Caco-2 (cell line): ENCODE measurements at regions of chr14 and their contacts with region 1.

Region 1: GRCh38 chr14:102316743-102317563 is 2.6 kb upstream of the ZNF839 start:
- DNase-seq: peak; percentile 93 to 96
- H3K4me3 ChIP-seq: peak overlapping the region; percentile 55
- H3K4me3 Mint-ChIP-seq: peak overlapping the region; percentile 89
- H3K27ac Mint-ChIP-seq: peak overlapping the region; percentile 94
- H3K4me1 ChIP-seq: peaks cover 30% of the 10 kb centered on the region
- H3K4me1 Mint-ChIP-seq: peaks cover 32% of the 10 kb centered on the region
- H3K27me3 ChIP-seq: no peaks in the 10 kb centered on the region
- H3K27me3 Mint-ChIP-seq: no peaks in the 10 kb centered on the region
- CTCF ChIP-seq: peak; percentile 72 to 88

Region 2: DNA sequence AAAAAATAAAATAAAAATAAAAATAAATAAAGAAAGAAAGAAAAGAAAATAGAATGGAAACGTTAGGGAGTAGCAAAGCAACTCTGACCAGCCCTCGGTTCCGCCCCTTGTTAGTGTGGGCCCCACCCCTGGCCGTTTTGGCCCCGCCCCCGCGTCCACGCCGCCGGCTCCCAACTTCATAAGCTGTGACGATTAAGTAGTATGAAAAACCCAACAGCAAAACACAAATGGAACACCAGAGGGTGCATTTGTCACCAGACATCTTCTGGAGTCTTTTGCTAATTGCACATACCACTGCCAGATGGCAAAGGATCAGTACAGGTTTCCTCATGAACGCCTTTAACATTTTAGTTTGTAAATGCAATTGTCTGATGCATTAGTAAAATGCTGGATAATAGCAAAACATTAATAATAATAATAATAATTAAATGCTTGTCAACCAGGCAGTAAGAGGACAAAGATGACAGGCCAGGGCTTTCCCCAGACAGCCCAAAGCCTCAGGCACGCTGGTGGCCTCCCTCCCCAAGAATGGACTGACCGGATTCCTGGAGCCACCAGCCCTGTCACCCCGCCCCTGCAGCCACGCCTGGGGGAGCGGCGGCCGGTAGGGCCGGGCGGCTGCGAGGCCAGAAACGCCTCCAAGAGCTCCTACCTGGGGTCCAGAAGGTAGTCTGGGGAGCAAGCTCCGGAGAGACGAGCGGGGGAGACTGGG is 253.7 kb before region 1 on chr14:
- CTCF ChIA-PET with region 1: interaction called, 5 read pairs
- POLR2A ChIA-PET with region 1: no interaction called
- intact Hi-C with region 1: loop called (anchors 1 kb)
- DNase-seq: peak; percentile 87 to 89
- H3K4me3 ChIP-seq: 0 out of 2 replicates have a peak overlapping the region, but pooled peaks have one; percentile 13
- H3K4me3 Mint-ChIP-seq: peak overlapping the region; percentile 63
- H3K27ac Mint-ChIP-seq: peak overlapping the region; percentile 85
- H3K4me1 ChIP-seq: peaks cover 10% of the 10 kb centered on the region
- H3K4me1 Mint-ChIP-seq: peaks cover 7% of the 10 kb centered on the region
- H3K27me3 ChIP-seq: no peaks in the 10 kb centered on the region
- H3K27me3 Mint-ChIP-seq: no peaks in the 10 kb centered on the region
- CTCF ChIP-seq: peak; percentile 34 to 45

Region 3: DNA sequence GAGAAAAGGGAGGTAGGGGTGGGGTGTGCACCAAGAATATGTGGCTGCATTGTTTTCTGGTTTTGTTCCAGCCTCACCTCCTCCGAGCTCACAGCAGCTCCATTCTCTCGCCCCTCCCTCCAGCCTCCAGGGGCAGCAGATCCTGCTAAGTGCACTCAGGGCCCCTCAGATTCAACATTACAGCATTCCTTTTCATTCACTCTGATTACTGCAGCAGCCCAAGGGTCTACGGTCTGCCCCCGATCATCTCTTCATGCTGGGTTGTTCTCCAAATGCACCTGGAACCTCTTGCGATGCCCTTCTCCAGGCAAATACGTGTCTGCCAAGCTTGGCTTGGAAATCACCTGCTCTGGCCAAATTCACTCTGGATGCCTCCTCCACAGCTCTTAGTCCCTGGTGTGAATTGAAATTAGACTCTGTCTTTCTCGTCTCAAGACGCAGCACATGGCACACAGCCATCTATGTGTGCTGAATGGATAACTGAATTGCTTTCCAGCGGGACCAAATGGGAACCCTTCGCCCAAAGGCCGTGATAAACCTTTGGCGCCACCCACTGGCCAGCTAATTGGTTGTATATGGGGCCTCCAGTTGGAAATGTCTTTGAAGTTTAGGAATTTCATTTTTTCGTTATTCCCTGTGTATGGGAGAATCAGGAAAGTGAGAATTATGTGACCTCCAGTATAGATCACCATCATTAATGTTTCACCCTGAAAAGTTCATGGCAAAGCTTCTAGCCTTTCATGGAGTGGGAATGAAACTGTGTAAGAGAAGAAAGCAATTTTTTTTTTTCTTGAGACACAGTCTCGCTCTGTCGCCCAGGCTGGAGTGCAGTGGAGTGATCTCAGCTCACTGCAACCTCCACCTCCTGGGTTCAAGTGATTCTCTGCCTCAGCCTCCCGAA is 220.5 kb before region 1 on chr14:
- CTCF ChIA-PET with region 1: interaction called, 11 read pairs
- POLR2A ChIA-PET with region 1: interaction called, 5 read pairs
- intact Hi-C with region 1: loop called (anchors 2 kb)
- DNase-seq: peak; percentile 80 to 87
- H3K4me3 ChIP-seq: no peak overlapping the region
- H3K4me3 Mint-ChIP-seq: peak overlapping the region; percentile 62
- H3K27ac Mint-ChIP-seq: peak overlapping the region; percentile 49
- H3K4me1 ChIP-seq: peaks cover 36% of the 10 kb centered on the region
- H3K4me1 Mint-ChIP-seq: peaks cover 16% of the 10 kb centered on the region
- H3K27me3 ChIP-seq: no peaks in the 10 kb centered on the region
- H3K27me3 Mint-ChIP-seq: no peaks in the 10 kb centered on the region
- CTCF ChIP-seq: peak; percentile 58 to 86

Region 4: DNA sequence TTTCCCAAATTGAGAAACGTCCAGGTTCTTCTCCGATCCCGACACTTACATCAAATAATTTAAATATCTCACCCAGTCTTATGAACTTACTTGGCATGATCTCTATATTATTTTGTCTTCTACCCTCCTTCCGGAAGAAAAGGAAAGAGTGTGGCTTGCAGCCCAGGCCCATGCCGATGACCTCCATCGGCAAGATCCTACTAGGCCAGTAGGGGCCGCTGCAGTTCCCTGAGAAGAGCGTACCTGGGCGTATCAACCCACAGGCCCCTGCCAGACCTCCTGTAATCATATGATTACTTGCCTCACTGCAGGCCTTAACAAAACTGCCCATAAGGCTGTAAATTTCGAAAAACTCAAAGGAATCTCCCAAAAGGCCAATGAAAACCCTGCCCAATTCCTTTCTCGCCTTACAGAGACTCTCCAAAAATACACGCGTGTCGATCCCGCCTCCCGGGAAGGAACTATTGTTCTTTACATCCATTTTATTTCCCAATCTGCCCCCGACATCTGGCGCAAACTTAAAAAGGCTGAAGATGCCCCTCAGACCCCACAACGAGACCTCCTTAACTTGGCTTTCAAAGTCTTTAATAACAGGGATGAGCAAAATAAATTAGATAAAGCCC is 81.6 kb before region 1 on chr14:
- CTCF ChIA-PET with region 1: interaction called, 5 read pairs
- POLR2A ChIA-PET with region 1: interaction called, 5 read pairs
- intact Hi-C with region 1: loop called (anchors 1 kb)
- DNase-seq: peak; percentile 71 to 82
- H3K4me3 ChIP-seq: no peak overlapping the region
- H3K4me3 Mint-ChIP-seq: no peak overlapping the region
- H3K27ac Mint-ChIP-seq: no peak overlapping the region
- H3K4me1 ChIP-seq: no peaks in the 10 kb centered on the region
- H3K4me1 Mint-ChIP-seq: no peaks in the 10 kb centered on the region
- H3K27me3 ChIP-seq: no peaks in the 10 kb centered on the region; the same call in 1 of the 2 replicates
- H3K27me3 Mint-ChIP-seq: peaks cover under 1% of the 10 kb centered on the region
- CTCF ChIP-seq: peak; percentile 55 to 94

Region 5: DNA sequence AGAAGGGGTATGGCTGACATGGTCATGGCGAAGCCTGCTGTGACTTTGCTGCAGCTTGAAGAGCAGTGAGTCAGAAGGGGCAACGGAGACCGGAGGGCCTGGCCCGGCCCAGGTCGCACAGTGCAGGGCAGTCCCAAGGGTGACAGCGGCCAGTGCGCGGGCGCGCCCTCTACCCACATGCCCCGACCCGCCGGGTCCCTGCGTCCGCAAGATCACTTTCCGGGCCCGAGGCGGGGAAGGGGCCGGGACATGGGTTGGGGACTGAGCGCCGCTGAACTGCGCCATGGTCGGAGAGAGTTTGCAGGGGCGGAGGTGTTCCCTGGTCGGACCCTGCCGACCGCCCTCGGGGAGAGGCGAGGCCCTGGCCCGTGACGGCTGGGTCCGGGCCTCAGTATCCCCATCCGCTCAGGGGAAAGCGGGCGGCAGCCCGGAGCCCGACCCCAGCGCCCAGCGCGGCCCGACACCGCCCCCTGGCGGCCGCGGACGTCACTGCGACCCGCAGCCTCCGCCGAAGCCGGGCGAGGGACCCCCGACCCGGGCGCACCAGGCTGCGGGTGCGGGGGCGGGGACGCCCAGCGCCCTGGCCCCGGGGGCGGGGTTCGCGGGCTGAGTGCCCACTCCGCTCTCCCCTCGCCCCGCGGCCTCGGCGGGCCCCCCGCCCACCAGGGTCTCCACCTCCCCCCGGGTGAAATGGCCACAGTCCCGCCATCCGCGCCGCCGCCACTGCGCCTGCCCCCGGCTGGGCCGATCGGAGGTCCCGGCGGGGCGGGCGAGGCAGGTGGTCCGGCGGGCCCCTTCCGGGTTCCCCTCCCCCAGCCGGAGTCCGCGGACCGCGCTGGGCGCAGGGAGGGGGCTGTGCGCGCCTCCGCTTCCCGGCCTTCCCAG is 199.8 kb after region 1 on chr14:
- CTCF ChIA-PET with region 1: no interaction called
- POLR2A ChIA-PET with region 1: no interaction called
- intact Hi-C with region 1: loop called (anchors 2 kb)
- DNase-seq: peak; percentile 69 to 82
- H3K4me3 ChIP-seq: peak overlapping the region; percentile 67
- H3K4me3 Mint-ChIP-seq: peak overlapping the region; percentile 85
- H3K27ac Mint-ChIP-seq: no peak overlapping the region
- H3K4me1 ChIP-seq: no peaks in the 10 kb centered on the region; the same call in 1 of the 2 replicates
- H3K4me1 Mint-ChIP-seq: no peaks in the 10 kb centered on the region
- H3K27me3 ChIP-seq: no peaks in the 10 kb centered on the region
- H3K27me3 Mint-ChIP-seq: no peaks in the 10 kb centered on the region
- CTCF ChIP-seq: peak; percentile 48 to 89

Region 6: DNA sequence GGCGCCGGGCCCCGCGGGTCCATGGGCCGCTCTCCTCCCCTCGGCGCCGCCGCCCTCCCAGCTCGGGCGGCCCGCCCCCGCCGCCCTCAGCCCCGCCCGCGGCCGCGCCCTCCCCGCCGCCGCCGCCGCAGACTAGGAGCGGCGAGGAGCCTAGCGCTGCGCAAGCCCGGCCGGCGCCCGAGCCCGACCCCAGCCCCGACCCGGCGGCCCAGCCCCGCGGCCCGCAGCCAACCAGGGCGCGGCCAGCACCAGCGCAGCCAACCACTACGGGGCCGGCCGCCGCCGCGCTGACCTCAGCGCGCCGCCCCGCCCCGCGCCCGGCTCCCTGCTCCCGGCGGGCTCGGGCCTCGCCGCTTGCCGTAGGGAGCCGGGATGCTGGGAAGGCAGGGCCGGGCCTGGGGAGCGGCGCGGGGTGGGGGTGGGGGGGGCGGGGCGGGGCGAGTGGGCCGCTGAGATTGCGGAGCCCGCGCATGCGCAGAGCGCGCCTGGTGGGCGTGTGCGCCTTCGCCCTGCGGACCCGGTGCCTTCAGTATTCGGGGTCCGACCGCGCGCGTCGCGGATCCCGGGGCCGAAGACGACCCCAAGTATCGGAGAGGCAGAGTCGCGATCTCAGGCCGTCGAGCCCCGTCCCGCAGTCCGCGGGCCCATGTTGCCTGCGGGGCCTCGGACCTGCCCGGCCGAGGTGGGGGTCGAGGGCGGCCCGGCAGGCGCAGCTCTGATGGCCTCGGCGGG is 740.6 kb after region 1 on chr14 and contains the start of gene CDC42BPB:
- CTCF ChIA-PET with region 1: no interaction called
- POLR2A ChIA-PET with region 1: no interaction called
- intact Hi-C with region 1: loop called (anchors 5 kb)
- DNase-seq: peak; percentile 88 to 95
- H3K4me3 ChIP-seq: peak within 1 kb of the TSS; percentile 100
- H3K4me3 Mint-ChIP-seq: peak within 1 kb of the TSS; percentile 86
- H3K27ac Mint-ChIP-seq: peak within 1 kb of the TSS; percentile 65
- H3K4me1 ChIP-seq: peaks cover 17% of the 10 kb centered on the region; the same call in 1 of the 2 replicates
- H3K4me1 Mint-ChIP-seq: no peaks in the 10 kb centered on the region
- H3K27me3 ChIP-seq: no peaks in the 10 kb centered on the region
- H3K27me3 Mint-ChIP-seq: no peaks in the 10 kb centered on the region
- CTCF ChIP-seq: no peak
- total RNA-seq, gene CDC42BPB: 55.1 and 60.0 TPM in 2 replicates

Region 7: DNA sequence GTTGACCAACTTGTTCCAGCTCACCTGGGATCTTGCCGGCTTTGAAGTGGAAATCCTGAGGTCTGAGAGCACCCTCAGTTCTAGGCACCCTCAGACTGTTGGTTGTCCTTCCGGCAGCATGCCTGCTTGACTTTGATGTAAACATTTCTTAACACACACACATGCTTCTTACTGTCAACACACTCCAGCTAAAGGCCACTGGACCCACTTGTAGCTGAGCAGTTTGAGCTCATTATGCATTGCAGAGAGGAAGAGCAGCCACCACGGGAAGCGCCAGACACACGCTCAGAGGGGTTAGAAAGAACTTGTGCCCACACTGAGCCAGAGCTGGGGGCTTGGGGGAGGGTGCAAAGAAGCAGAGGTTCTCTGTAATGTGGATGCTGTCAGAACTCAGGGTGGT is 862.1 kb after region 1 on chr14:
- CTCF ChIA-PET with region 1: no interaction called
- POLR2A ChIA-PET with region 1: no interaction called
- intact Hi-C with region 1: no loop called
- DNase-seq: no peak
- H3K4me3 ChIP-seq: no peak overlapping the region
- H3K4me3 Mint-ChIP-seq: no peak overlapping the region
- H3K27ac Mint-ChIP-seq: no peak overlapping the region
- H3K4me1 ChIP-seq: peaks cover 14% of the 10 kb centered on the region
- H3K4me1 Mint-ChIP-seq: no peaks in the 10 kb centered on the region
- H3K27me3 ChIP-seq: no peaks in the 10 kb centered on the region
- H3K27me3 Mint-ChIP-seq: no peaks in the 10 kb centered on the region
- CTCF ChIP-seq: no peak